ENCODE measurements at regions of chr18 and their contacts with region 1.

Region 1: GRCh38 chr18:55189972-55190371 is 230.7 kb upstream of the CCDC68 start:
- DNase-seq: no peak
- H3K4me3 ChIP-seq: no peak overlapping the region
- H3K27ac ChIP-seq: no peak overlapping the region
- H3K4me1 ChIP-seq: no peaks in the 10 kb centered on the region
- H3K27me3 ChIP-seq: no peaks in the 10 kb centered on the region
- CTCF ChIP-seq: no peak
- EP300 ChIP-seq: no peak
- POLR2A ChIP-seq: no peak

Region 2: DNA sequence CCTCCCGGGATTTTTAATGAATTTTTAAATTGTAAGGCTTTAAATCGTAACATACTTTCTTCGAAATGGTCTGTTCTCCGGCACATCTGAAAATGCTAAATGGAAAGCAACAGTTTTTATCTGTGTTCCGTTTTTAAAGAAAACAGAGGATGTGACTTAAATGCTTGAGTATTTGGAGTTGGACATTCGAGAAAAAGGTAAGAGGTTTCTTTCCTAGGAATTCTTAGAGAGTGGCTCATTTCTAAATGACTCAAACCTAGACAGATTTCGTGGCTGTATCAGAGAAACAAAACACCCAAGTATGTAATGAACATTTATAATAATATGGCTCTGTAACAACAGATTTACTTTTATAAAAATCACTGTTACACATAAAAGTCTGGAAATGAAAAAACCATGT is 53.1 kb before region 1 on chr18:
- in situ Hi-C with region 1: no loop called
- intact Hi-C with region 1: loop called (anchors 10 kb)
- DNase-seq: no peak
- H3K4me3 ChIP-seq: no peak overlapping the region
- H3K27ac ChIP-seq: no peak overlapping the region
- H3K4me1 ChIP-seq: no peaks in the 10 kb centered on the region
- H3K27me3 ChIP-seq: no peaks in the 10 kb centered on the region
- CTCF ChIP-seq: no peak
- EP300 ChIP-seq: no peak
- POLR2A ChIP-seq: no peak